H1 (cell line): ENCODE measurements at regions of chr22 and their contacts with region 1.

Region 1: DNA sequence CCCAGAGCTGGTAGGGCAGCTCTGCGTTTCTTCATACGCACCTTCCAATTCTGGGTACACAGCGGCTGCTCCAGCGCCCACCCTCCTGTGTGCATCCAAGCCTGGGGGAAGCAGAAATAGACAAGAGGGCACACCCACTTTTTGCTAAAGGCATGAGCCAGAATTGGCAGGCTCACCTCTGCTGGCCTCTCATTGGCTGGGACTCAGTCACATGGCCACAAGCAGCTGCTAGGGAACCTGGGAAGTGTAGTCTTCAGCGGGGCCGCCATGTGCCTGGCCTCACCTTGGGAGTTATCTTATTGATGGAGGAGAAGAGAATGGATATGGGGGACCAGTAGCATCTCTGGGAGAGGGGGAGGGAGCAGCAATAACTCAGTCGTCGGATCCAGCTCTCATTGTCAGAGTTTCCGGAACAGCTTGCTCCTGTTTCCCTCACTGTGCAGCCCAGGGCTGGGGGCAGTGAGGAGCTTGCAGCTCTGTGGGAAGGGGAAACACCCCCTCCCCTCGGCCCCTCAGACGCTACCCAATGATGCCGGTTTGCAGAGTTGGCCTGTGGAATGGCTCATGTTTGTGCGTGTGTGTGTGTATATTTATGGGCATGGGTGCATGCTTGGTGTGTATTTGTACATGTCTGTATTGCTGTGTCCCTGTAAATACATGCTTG is 11.8 kb upstream of the MIEF1 start:
- DNase-seq: peak; percentile 39 to 81
- H3K4me3 ChIP-seq: no peak overlapping the region
- H3K27ac ChIP-seq: no peak overlapping the region
- H3K4me1 ChIP-seq: peaks cover 0 to 6% (median 4%) of the 10 kb centered on the region in 4 experiments; a peak in 4 of 7 replicates
- H3K27me3 ChIP-seq: peaks cover 0 to 13% (median 3%) of the 10 kb centered on the region in 4 experiments; a peak in 4 of 7 replicates
- CTCF ChIP-seq: no peak
- EP300 ChIP-seq: no peak
- POLR2A ChIP-seq: no peak
- RAD21 ChIP-seq: no peak

Region 2: GRCh38 chr22:39462443-39463221 is 27.6 kb before region 1 on chr22:
- CTCF ChIA-PET with region 1: interaction called, 60 read pairs
- POLR2A ChIA-PET with region 1: interaction called, 3 read pairs
- DNase-seq: no peak
- H3K4me3 ChIP-seq: no peak overlapping the region
- H3K27ac ChIP-seq: no peak overlapping the region
- H3K4me1 ChIP-seq: peaks cover 0 to 5% (median 0%) of the 10 kb centered on the region in 4 experiments; a peak in 3 of 7 replicates
- H3K27me3 ChIP-seq: peaks cover 1 to 10% (median 7%) of the 10 kb centered on the region in 4 experiments; a peak in 6 of 7 replicates
- CTCF ChIP-seq: peak; percentile 38 to 57 (median 52)
- EP300 ChIP-seq: no peak
- POLR2A ChIP-seq: no peak
- RAD21 ChIP-seq: peak; percentile 73 to 77

Region 3: GRCh38 chr22:39478441-39479264 is 11.6 kb before region 1 on chr22:
- CTCF ChIA-PET with region 1: interaction called, 120 read pairs
- POLR2A ChIA-PET with region 1: no interaction called
- DNase-seq: peak in 1 of 2 experiments; percentile 85
- H3K4me3 ChIP-seq: no peak overlapping the region
- H3K27ac ChIP-seq: no peak overlapping the region
- H3K4me1 ChIP-seq: peaks cover 4 to 15% (median 9%) of the 10 kb centered on the region in 4 experiments; a peak in 6 of 7 replicates
- H3K27me3 ChIP-seq: no peaks in the 10 kb centered on the region; a peak in 1 of 7 replicates
- CTCF ChIP-seq: no peak
- EP300 ChIP-seq: no peak
- POLR2A ChIP-seq: no peak
- RAD21 ChIP-seq: peak in 1 of 2 experiments; percentile 5; a peak in 1 of 4 replicates

Region 4: DNA sequence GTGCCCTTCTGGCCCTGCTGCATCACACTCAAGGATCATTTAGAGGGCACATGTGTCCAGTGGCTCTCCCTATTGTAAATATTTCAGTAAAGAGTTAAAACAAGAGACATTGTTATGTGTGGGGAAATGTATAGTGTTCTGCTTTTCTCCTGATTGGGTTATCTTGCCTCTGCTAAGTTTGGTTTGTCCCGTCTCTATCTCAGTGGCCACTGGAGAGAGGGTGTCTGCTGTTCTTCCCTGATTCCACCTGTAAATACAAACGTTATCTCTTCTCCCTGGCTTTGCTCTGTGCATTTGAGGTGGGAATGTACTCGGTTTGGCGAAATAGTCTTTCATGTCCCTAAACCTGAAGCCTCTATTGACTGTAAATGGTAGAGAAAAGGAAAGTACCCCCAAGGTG is 18.1 kb after region 1 on chr22:
- CTCF ChIA-PET with region 1: interaction called, 278 read pairs
- POLR2A ChIA-PET with region 1: no interaction called
- DNase-seq: no peak
- H3K4me3 ChIP-seq: no peak overlapping the region
- H3K27ac ChIP-seq: no peak overlapping the region
- H3K4me1 ChIP-seq: peaks cover 0 to 3% (median 0%) of the 10 kb centered on the region in 4 experiments; a peak in 2 of 7 replicates
- H3K27me3 ChIP-seq: peaks cover 38 to 77% (median 75%) of the 10 kb centered on the region in 4 experiments
- CTCF ChIP-seq: no peak
- EP300 ChIP-seq: no peak
- POLR2A ChIP-seq: no peak
- RAD21 ChIP-seq: no peak